ENCODE measurements at regions of chr1 and their contacts with region 1.

Region 1: DNA sequence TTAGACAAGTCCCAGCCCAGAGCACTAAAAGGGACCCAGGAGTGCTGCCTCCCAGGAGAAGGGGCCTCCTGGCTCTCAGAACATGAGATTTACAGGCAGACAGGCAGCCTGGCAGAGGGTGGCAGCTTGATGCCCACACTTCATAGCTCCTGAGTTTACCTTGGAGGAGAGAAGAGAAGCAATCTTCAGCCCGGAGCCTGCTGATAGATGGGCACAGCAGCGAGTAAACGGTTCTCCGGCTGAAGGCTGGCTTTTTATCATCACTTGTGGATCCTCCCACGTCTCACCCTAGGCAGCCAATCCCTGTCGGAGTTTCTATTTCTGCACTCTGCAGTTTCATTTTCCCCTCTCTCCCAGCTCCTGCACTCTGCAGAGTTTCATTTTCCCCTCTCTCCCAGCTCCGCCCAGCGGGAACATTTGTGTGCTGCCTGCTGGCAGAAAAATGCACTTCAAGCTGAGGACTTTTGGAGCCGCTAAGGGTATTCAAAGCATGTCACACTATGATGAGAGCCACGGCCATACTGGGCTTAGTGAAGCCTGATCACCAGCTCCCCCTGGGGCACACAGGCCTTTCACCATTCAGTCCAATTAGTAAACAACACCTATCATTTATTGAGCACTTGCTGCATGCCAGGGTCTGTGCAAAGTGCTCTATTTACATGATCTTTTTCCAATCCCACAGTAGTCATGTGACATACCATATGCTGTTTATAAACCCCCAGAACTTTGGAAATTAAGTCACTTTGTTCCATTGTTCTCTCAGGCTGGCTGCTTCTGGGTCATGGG is at the start of gene IFI6:
- DNase-seq: peak; percentile 77 to 85
- H3K4me3 ChIP-seq: peak within 1 kb of the TSS; percentile 43; the same call in 1 of the 2 replicates
- H3K27ac ChIP-seq: peak within 1 kb of the TSS; percentile 30; the same call in 1 of the 2 replicates
- H3K4me1 ChIP-seq: peaks cover 4% of the 10 kb centered on the region; the same call in 1 of the 2 replicates
- H3K27me3 ChIP-seq: no peaks in the 10 kb centered on the region
- CTCF ChIP-seq: no peak
- total RNA-seq, gene IFI6: 8.6 and 16.4 TPM in 2 replicates

Region 2: DNA sequence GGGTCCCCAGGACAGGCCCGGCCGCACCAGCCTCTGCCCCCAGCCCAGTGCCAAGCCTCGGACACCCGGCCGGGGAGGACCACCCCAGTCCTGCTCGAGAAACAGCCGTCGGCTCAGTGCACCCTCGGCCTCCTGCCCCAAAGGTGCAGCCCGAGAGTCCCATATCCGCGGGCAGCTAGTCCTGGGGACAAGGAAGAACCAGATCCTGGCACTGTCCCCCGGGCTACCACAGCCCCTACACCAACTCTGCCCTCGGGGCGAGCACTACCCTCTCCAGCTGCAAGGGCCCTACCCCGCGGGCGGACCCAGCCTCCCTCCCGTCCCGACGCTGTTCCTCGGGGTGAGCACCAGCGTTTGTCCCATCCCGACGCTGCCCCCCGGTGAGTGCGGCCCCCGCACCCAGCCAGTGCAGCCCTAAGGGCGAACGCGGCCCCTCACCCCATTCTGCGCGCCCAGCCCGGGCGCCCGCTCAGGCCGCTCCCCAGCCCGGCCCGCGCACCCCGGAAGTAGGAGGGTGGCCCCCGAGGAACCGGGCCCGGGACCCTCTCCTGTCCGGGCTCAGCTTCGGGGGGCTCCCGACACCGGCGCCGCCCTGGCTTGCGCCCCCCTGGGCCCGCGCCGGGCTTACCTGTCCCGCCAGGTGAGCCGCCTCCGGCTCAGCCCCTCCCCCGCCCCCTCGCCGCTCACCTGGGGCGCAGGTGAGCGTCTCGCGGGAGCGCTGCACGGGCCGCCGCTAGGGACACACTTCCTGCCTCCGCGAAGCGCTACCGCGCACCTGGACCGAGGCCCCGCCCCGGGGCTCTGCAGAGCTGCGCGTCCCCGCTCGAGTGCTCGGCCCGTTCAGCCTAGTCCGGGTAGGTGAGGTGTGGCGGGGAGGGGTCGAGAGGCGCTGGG is 712.2 kb before region 1 on chr1 and contains the start of gene KDF1:
- CTCF ChIA-PET with region 1: no interaction called
- POLR2A ChIA-PET with region 1: no interaction called
- intact Hi-C with region 1: no loop called
- DNase-seq: peak; percentile 68 to 88
- H3K4me3 ChIP-seq: peak within 1 kb of the TSS; percentile 81
- H3K27ac ChIP-seq: peak within 1 kb of the TSS; percentile 23; the same call in 1 of the 2 replicates
- H3K4me1 ChIP-seq: peaks cover 19% of the 10 kb centered on the region
- H3K27me3 ChIP-seq: no peaks in the 10 kb centered on the region
- CTCF ChIP-seq: no peak; the same call in 1 of the 2 replicates
- total RNA-seq, gene KDF1: 20.5 and 21.3 TPM in 2 replicates

Region 3: GRCh38 chr1:27341525-27342252 is 330.5 kb before region 1 on chr1 and contains the start of gene SYTL1:
- CTCF ChIA-PET with region 1: interaction called, 14 read pairs
- POLR2A ChIA-PET with region 1: no interaction called
- intact Hi-C with region 1: no loop called
- DNase-seq: peak; percentile 64 to 82
- H3K4me3 ChIP-seq: peak within 1 kb of the TSS; percentile 70
- H3K27ac ChIP-seq: peak within 1 kb of the TSS; percentile 77
- H3K4me1 ChIP-seq: peaks cover 24% of the 10 kb centered on the region
- H3K27me3 ChIP-seq: no peaks in the 10 kb centered on the region
- CTCF ChIP-seq: no peak
- total RNA-seq, gene SYTL1: 43.7 and 49.8 TPM in 2 replicates

Region 4: DNA sequence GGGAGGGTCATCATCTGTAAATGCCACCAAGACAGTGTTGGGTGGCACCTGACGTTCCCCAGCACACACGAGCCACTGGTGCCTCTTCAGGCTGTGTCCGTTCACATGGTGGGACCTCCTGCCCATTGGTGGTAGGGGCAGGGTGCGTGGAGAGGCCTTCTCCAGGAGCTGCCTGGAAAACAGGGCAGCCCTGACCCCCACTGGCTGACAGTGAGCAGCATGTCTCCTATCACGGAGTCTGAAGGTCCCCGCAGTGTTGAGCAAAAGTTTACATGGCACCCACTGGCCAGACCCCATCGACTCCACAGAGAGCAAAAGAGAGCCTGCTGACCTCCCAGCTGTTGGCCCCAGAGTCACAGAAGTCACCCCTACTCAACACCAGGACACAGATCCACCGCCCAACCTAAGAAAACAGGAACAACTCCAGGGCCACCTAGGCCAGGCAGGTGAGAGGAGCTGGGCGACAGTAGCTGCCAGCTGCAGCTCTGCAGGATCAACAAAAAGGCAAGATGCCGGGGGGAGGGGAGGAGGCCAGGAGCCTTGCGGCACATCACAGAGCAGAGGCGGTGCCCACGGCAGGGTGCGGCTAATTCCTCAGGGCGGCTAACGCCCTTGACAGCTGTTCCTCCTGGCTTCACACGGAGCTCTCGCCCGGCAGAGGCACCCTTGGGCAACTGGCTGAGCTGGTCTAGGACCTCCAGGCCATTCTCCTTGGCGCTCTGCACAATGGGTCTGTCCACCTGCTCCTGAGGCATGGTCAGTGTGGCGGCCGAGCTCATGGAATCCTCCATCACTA is 14.3 kb after region 1 on chr1:
- CTCF ChIA-PET with region 1: interaction called, 9 read pairs
- POLR2A ChIA-PET with region 1: no interaction called
- intact Hi-C with region 1: loop called (anchors 1 kb)
- DNase-seq: peak; percentile 76 to 91
- H3K4me3 ChIP-seq: no peak overlapping the region
- H3K27ac ChIP-seq: no peak overlapping the region
- H3K4me1 ChIP-seq: peaks cover 14% of the 10 kb centered on the region; the same call in 1 of the 2 replicates
- H3K27me3 ChIP-seq: no peaks in the 10 kb centered on the region
- CTCF ChIP-seq: no peak

Region 5: GRCh38 chr1:27725374-27726173 is 53.4 kb after region 1 on chr1 and contains the start of gene FAM76A:
- CTCF ChIA-PET with region 1: interaction called, 14 read pairs
- POLR2A ChIA-PET with region 1: interaction called, 7 read pairs
- intact Hi-C with region 1: loop called (anchors 1 kb)
- DNase-seq: peak; percentile 89 to 98
- H3K4me3 ChIP-seq: peak within 1 kb of the TSS; percentile 68
- H3K27ac ChIP-seq: peak within 1 kb of the TSS; percentile 12; the same call in 1 of the 2 replicates
- H3K4me1 ChIP-seq: no peaks in the 10 kb centered on the region
- H3K27me3 ChIP-seq: no peaks in the 10 kb centered on the region
- CTCF ChIP-seq: no peak; the same call in 1 of the 2 replicates
- total RNA-seq, gene FAM76A: 9.4 and 9.9 TPM in 2 replicates

Region 6: DNA sequence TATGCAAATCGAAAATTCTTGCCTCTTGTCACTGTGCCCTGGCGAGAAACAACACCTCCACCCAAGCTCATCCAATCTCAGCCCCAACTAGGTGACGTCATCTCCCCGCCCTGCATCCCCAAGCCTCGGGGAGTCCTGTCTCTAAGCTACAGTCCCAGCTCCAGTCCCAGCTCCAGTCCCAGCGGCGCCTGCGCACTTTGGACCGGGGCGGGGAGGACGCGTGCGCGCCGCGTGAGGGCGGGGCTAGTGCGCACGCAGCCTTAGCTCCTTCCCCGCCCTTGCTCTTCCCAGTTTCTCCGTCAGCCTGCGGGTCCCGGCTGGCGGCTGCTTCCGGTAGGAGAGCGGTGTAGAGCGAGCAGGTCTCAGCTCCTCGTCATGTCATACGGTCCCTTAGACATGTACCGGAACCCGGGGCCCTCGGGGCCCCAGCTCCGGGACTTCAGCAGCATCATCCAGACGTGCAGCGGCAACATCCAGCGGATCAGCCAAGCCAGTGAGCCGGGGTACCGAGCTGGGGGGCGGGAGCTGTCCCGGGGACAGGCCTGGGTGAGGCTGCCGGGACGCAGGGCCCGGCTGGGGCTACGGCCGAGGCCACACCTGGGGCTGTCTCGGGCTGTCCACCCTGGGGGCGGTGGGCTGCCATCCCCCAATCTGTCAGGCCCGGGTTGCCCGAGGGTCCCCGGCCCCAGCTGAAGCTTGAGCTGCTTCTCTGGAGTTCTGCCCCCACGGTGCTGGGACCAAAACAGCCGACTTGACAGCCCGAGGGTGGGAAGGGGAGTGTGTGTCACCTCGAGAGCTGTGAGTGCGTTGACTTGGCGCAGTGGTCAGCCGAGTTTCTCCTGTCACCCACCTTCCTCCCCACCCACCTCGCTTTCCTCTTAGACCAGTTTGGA is 101.0 kb after region 1 on chr1 and contains the start of gene STX12:
- CTCF ChIA-PET with region 1: interaction called, 8 read pairs
- POLR2A ChIA-PET with region 1: interaction called, 3 read pairs
- intact Hi-C with region 1: loop called (anchors 1 kb)
- DNase-seq: peak; percentile 87 to 98
- H3K4me3 ChIP-seq: peak within 1 kb of the TSS; percentile 58
- H3K27ac ChIP-seq: no peak within 1 kb of the TSS
- H3K4me1 ChIP-seq: peaks cover 10% of the 10 kb centered on the region; the same call in 1 of the 2 replicates
- H3K27me3 ChIP-seq: no peaks in the 10 kb centered on the region
- CTCF ChIP-seq: no peak
- total RNA-seq, gene STX12: 19.2 and 23.7 TPM in 2 replicates

Region 7: GRCh38 chr1:27830621-27831424 is 158.7 kb after region 1 on chr1 and contains the start of gene PPP1R8:
- CTCF ChIA-PET with region 1: interaction called, 5 read pairs
- POLR2A ChIA-PET with region 1: no interaction called
- intact Hi-C with region 1: loop called (anchors 5 kb)
- DNase-seq: peak; percentile 87 to 91
- H3K4me3 ChIP-seq: peak within 1 kb of the TSS; percentile 94
- H3K27ac ChIP-seq: peak within 1 kb of the TSS; percentile 46; the same call in 1 of the 2 replicates
- H3K4me1 ChIP-seq: 0 out of 2 replicates have a peak, but pooled peaks cover 14% of the 10 kb centered on the region
- H3K27me3 ChIP-seq: no peaks in the 10 kb centered on the region
- CTCF ChIP-seq: no peak
- total RNA-seq, gene PPP1R8: 29.2 and 38.4 TPM in 2 replicates

Region 8: GRCh38 chr1:27973771-27974416 is 301.7 kb after region 1 on chr1:
- CTCF ChIA-PET with region 1: interaction called, 13 read pairs
- POLR2A ChIA-PET with region 1: no interaction called
- intact Hi-C with region 1: loop called (anchors 10 kb)
- DNase-seq: no peak
- H3K4me3 ChIP-seq: no peak overlapping the region
- H3K27ac ChIP-seq: no peak overlapping the region
- H3K4me1 ChIP-seq: peaks cover 3% of the 10 kb centered on the region; the same call in 1 of the 2 replicates
- H3K27me3 ChIP-seq: no peaks in the 10 kb centered on the region
- CTCF ChIP-seq: no peak

Measured in PC-9 (cell line).